Psoas muscle (tissue), 8 donors: ENCODE measurements at regions of chr1 and their contacts with region 1.

Region 1: GRCh38 chr1:44819608-44820327 is 11.4 kb downstream of the BTBD19 start:
- DNase-seq: peak; percentile 81 to 91
- ATAC-seq: peak; percentile 89 to 94 (median 90)
- H3K4me3 ChIP-seq: peak overlapping the region; percentile 77
- H3K27ac ChIP-seq: peak overlapping the region; percentile 96
- H3K4me1 ChIP-seq: no peaks in the 10 kb centered on the region
- H3K27me3 ChIP-seq: no peaks in the 10 kb centered on the region
- CTCF ChIP-seq: no peak

Region 2: DNA sequence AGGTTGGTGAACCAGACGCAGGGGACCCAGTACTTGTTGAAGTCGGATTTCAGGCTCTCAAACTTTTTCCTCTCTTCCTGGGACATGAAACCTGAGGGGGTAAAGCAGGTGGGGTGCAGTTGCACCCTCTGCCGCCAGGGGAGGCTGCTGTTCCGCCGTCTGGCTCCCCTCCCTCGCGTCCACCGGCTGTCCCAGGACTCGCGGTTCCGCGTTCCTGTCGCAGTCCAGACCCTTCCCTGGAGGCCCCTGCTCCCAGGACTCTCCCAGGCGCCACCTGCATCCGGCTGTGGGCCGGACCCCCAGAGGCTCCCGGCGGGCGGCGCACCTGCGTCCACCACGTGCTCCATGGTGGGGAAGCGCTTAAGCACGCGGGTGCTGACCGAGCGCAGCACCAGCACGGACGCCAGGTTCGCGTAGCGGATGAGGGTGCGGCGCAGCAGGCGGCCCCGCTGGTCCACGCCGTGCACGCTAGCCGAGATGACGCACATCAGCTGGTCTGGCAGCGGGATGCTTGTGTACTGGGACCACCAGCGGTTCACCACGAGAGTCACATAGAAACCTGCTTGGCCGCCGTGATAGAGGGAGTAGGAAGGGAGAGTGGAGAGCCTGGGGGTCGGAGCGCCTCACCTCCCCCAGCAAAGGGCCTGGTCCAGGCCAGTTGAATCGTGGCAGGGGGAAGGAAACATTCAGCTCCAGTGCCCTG is 33.5 kb before region 1 on chr1:
- intact Hi-C with region 1: loop called in 1 of 2 experiments (anchors 5 kb)
- DNase-seq: peak; percentile 72 to 85
- ATAC-seq: peak; percentile 77 to 89 (median 84)
- H3K4me3 ChIP-seq: peak overlapping the region; percentile 68
- H3K27ac ChIP-seq: peak overlapping the region; percentile 48
- H3K4me1 ChIP-seq: peaks cover 19% of the 10 kb centered on the region
- H3K27me3 ChIP-seq: no peaks in the 10 kb centered on the region
- CTCF ChIP-seq: peak; percentile 99

Region 3: GRCh38 chr1:44985747-44986359 is 166.1 kb after region 1 on chr1:
- intact Hi-C with region 1: no loop called
- DNase-seq: no peak
- ATAC-seq: peak in 1 of 4 donors; percentile 10
- H3K4me3 ChIP-seq: peak overlapping the region; percentile 89
- H3K27ac ChIP-seq: peak overlapping the region; percentile 84
- H3K4me1 ChIP-seq: peaks cover 34% of the 10 kb centered on the region
- H3K27me3 ChIP-seq: no peaks in the 10 kb centered on the region
- CTCF ChIP-seq: no peak